ENCODE measurements at regions of chr3 and their contacts with region 1.

Region 1: DNA sequence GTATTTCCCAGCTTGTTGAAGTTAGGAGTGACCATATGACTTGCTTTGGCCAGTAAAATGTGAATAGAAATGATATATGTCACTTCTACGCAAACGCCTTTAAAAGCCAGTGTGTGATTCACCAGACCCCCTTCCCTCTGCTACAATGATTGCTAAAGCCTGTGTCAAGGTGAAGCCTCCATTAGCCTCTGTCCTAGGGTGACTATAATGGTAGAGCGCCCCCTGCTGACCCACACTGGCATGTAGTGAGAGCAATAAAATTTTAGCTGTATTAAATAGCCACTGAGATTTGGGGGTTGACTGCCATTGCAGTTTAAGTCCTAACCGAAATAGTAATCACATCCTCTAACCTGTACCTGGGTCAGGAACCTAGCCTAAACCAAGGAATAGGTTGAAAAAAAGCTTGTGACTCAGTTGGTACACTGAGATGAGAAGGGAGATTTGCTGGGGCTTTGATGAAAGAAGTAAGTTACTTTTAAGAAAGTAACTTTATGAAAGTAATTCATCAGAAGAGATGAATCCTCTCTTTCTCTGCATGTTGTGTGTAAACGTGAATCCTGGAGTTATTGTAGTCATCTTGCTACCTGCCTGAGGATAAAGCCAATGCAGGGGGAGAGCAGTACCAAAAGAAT is 52.6 kb downstream of the GTF2E1 start:
- H3K4me3 Mint-ChIP-seq: no peak overlapping the region
- H3K27ac Mint-ChIP-seq: no peak overlapping the region
- H3K4me1 Mint-ChIP-seq: no peaks in the 10 kb centered on the region
- H3K27me3 Mint-ChIP-seq: no peaks in the 10 kb centered on the region

Region 2: GRCh38 chr3:120192159-120192558 is 603.0 kb before region 1 on chr3:
- intact Hi-C with region 1: no loop called
- H3K4me3 Mint-ChIP-seq: no peak overlapping the region
- H3K27ac Mint-ChIP-seq: no peak overlapping the region
- H3K4me1 Mint-ChIP-seq: no peaks in the 10 kb centered on the region
- H3K27me3 Mint-ChIP-seq: no peaks in the 10 kb centered on the region

Region 3: GRCh38 chr3:120239644-120240043 is 555.5 kb before region 1 on chr3:
- intact Hi-C with region 1: loop called (anchors 5 kb)
- H3K4me3 Mint-ChIP-seq: no peak overlapping the region
- H3K27ac Mint-ChIP-seq: no peak overlapping the region
- H3K4me1 Mint-ChIP-seq: peaks cover 10% of the 10 kb centered on the region
- H3K27me3 Mint-ChIP-seq: no peaks in the 10 kb centered on the region

Region 4: DNA sequence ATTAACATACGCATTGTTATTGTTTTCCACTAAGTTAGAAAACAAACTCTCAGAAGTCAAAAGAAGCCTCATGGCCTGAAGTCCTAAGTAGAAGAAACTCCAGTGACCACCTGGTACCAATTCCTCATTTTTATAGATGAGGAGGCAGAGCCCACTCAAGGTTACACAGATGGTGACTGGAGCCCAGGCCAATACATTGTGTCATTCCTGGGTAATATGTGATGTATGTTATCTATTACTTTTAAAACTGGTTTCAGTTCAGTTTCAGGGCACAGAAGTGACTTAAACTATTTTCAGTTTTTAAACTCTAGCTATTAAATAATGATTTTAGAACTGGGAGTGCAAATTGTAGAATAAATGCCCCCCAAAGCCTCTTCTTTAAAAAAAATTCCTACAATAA is 46.1 kb after region 1 on chr3:
- intact Hi-C with region 1: no loop called
- H3K4me3 Mint-ChIP-seq: no peak overlapping the region
- H3K27ac Mint-ChIP-seq: no peak overlapping the region
- H3K4me1 Mint-ChIP-seq: no peaks in the 10 kb centered on the region
- H3K27me3 Mint-ChIP-seq: no peaks in the 10 kb centered on the region